WTC11 (cell line): ENCODE measurements at regions of chr11 and their contacts with region 1.

Region 1: GRCh38 chr11:112453601-112454577 is 193.2 kb upstream of the PLET1 start:
- DNase-seq: peak; percentile 67
- ATAC-seq: peak; percentile 84
- H3K4me3 Mint-ChIP-seq: no peak overlapping the region
- H3K27ac Mint-ChIP-seq: no peak overlapping the region
- H3K4me1 Mint-ChIP-seq: peaks cover 9% of the 10 kb centered on the region
- H3K27me3 Mint-ChIP-seq: peaks cover 21% of the 10 kb centered on the region
- CTCF ChIP-seq: peak; percentile 18; the same call in 1 of the 2 replicates

Region 2: DNA sequence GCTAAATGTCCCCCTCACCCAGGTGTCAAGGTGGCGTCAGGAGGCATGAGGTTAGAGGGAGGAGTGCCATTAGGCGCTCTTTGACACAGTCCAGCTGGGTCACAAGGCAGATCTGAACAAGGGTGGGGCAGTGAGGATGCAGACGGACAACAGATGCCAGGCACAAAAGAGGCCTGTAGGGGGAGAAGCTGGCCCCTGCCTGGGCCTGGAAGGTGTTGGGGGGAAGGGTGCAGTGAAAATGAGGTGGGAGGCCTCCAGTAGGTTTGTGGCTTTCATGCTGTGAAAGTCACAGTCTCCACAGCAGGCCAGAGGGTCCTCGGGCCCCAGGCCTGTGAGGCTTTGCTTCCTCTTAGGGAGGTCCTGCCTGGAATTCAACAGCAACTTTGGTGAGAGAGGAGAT is 108.2 kb before region 1 on chr11:
- CTCF ChIA-PET with region 1: interaction called, 14 read pairs
- POLR2A ChIA-PET with region 1: no interaction called
- DNase-seq: peak; percentile 42
- ATAC-seq: peak; percentile 91
- H3K4me3 Mint-ChIP-seq: no peak overlapping the region
- H3K27ac Mint-ChIP-seq: no peak overlapping the region
- H3K4me1 Mint-ChIP-seq: peaks cover 6% of the 10 kb centered on the region
- H3K27me3 Mint-ChIP-seq: no peaks in the 10 kb centered on the region; the same call in 1 of the 2 replicates
- CTCF ChIP-seq: 0 out of 2 replicates have a peak, but pooled peaks have one; percentile 16

Region 3: DNA sequence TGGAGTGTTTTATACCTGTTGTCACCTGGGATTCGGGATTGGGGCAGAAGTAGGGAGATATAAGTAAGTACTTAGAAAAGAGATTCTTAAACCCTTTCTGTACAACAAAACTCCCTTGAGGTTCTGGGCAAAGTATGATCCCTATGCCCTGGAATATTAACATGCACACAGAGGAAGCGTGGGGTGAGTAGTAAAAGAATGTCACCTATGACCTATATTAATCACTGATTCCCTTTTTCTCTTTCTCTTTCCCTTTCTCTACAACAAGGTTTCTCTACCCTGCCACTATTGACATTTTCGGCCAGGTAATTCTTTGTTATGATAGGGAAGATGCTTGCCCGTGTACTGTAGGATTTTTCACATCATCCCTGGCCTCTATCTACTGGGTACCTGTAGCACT is 16.5 kb after region 1 on chr11:
- CTCF ChIA-PET with region 1: interaction called, 18 read pairs
- POLR2A ChIA-PET with region 1: no interaction called
- DNase-seq: no peak
- ATAC-seq: no peak
- H3K4me3 Mint-ChIP-seq: no peak overlapping the region
- H3K27ac Mint-ChIP-seq: no peak overlapping the region
- H3K4me1 Mint-ChIP-seq: no peaks in the 10 kb centered on the region
- H3K27me3 Mint-ChIP-seq: peaks cover 8% of the 10 kb centered on the region
- CTCF ChIP-seq: no peak

Region 4: DNA sequence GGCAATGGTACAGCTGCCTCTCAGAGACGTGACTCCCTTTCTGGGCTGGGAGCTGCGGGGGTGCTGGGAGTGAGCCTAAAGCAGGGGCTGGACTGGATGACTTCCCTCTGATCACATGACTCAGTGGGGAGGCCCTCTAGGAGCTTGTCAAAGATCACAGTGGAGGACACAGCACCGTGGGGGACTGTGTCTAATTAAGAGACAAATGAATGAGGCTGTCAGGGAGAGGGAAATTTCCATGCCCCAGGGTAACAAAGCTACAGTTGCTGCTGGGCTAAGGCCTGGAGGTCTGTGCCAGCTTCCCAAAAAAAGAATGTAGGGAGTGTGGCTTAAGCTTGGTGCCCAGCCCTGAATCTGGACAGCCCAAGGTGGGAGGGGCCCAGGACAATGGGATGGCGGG is 69.6 kb after region 1 on chr11:
- CTCF ChIA-PET with region 1: interaction called, 13 read pairs
- POLR2A ChIA-PET with region 1: no interaction called
- DNase-seq: peak; percentile 17
- ATAC-seq: peak; percentile 81
- H3K4me3 Mint-ChIP-seq: no peak overlapping the region
- H3K27ac Mint-ChIP-seq: no peak overlapping the region
- H3K4me1 Mint-ChIP-seq: peaks cover 16% of the 10 kb centered on the region
- H3K27me3 Mint-ChIP-seq: no peaks in the 10 kb centered on the region
- CTCF ChIP-seq: no peak

Region 5: DNA sequence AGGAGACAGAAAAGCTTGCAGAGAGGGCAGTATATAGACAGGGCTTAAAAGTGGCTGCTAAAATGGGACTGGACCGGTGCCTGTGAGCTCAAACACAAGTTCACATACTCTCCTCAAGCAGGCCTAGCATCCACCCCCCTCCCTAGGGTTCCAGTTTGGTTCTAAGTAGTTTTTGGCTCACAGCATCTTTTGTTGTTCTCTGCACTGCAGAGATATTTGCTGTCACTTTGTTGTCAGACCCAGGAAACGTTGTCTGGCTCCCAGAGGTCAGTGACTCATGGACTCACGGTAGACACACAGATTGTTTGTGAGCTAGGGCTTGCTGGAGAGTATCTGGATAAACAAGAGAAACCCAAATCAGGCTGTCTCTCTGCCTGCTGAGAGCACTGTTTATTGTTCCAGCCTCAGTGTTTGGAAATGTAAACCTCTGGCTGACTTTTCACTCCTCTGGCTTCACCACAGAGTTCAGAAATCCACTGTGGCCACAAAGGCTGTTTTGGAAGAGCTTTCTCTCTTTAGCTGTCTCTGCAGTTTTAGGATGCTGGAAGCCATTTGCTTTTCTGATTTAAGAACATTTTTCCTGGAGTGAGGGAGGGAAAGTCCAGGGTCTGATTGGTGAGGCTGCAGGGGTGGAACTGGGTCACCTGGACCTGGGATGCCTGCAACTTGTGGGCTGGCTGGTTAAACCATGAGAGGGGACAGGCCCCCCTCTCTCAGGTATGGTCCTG is 110.5 kb after region 1 on chr11:
- CTCF ChIA-PET with region 1: interaction called, 13 read pairs
- POLR2A ChIA-PET with region 1: no interaction called
- DNase-seq: no peak
- ATAC-seq: no peak
- H3K4me3 Mint-ChIP-seq: no peak overlapping the region
- H3K27ac Mint-ChIP-seq: no peak overlapping the region
- H3K4me1 Mint-ChIP-seq: peaks cover 5% of the 10 kb centered on the region
- H3K27me3 Mint-ChIP-seq: no peaks in the 10 kb centered on the region
- CTCF ChIP-seq: no peak

Region 6: DNA sequence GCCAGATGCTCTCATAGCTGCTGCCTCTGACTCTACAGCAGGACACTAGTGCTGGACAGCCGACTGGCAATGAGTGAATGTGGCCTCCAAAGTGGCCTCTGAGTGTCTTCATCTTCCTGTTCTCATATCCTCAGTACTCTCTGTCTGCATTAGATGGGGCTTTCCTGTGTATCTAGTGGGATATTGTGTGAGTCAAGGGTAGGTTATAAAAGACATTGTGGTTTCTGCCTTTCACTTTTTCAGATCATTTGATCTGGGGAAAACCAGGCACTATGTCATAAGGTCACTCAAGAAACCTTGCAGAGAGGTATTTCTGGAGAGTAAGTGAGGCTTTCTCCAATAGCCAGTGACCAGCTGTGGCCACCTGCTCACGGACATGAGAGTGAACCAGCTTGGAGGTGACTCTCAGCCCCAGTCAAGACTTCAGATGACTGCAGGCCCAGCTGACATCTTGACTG is 173.7 kb after region 1 on chr11:
- CTCF ChIA-PET with region 1: no interaction called
- POLR2A ChIA-PET with region 1: no interaction called
- DNase-seq: no peak
- ATAC-seq: no peak
- H3K4me3 Mint-ChIP-seq: no peak overlapping the region
- H3K27ac Mint-ChIP-seq: no peak overlapping the region
- H3K4me1 Mint-ChIP-seq: peaks cover 8% of the 10 kb centered on the region
- H3K27me3 Mint-ChIP-seq: 0 out of 2 replicates have a peak, but pooled peaks cover 3% of the 10 kb centered on the region
- CTCF ChIP-seq: no peak